Panc1 (cell line): ENCODE measurements at regions of chr5 and their contacts with region 1.

Region 1: GRCh38 chr5:36521838-36522745 is 84.3 kb upstream of the SLC1A3 start:
- DNase-seq: no peak
- ATAC-seq: no peak
- H3K4me3 ChIP-seq: no peak overlapping the region
- H3K27ac ChIP-seq: no peak overlapping the region
- H3K4me1 ChIP-seq: no peaks in the 10 kb centered on the region
- H3K27me3 ChIP-seq: no peaks in the 10 kb centered on the region
- CTCF ChIP-seq: no peak

Region 2: DNA sequence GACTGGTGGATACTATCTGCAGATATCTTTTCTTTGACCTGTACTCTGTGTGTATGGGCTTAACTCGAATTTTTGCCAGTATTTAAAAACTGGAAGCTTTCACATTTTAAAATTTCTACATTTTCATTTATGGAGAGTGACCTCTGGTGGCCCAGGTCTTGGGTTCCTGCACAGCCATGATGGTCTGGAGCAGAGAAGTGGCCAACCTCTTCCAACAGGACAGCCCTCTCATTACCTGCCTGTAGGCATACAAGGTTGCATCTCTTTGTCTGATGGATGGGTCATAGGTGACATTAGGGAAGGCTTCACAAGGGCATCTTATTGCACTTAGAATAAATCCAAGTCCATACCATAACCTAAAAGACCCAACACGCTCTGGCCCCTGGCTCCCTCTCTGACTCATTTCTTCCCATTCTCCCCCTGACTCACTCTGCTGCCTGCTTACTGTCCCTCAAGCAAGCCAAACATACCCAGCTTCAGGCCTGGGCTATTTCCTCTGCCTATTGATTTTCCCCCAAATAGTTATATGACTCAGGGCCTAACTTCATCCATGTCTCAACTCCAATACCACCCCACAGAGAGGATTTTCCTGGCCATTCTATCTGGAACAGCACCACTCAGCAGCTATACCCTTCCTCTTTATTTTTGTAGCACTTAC is 29.0 kb before region 1 on chr5:
- CTCF ChIA-PET with region 1: no interaction called
- POLR2A ChIA-PET with region 1: interaction called, 14 read pairs
- in situ Hi-C with region 1: no loop called
- intact Hi-C with region 1: no loop called
- DNase-seq: no peak
- ATAC-seq: no peak
- H3K4me3 ChIP-seq: no peak overlapping the region
- H3K27ac ChIP-seq: no peak overlapping the region
- H3K4me1 ChIP-seq: no peaks in the 10 kb centered on the region
- H3K27me3 ChIP-seq: no peaks in the 10 kb centered on the region
- CTCF ChIP-seq: no peak